OCI-LY7 (cell line): ENCODE measurements at regions of chr2 and their contacts with region 1.

Region 1: GRCh38 chr2:74250189-74250631 is 51.8 kb downstream of the MTHFD2 start:
- DNase-seq: peak; percentile 77
- H3K4me3 ChIP-seq: no peak overlapping the region
- H3K27ac ChIP-seq: no peak overlapping the region
- H3K4me1 ChIP-seq: no peaks in the 10 kb centered on the region
- CTCF ChIP-seq: peak; percentile 99

Region 2: DNA sequence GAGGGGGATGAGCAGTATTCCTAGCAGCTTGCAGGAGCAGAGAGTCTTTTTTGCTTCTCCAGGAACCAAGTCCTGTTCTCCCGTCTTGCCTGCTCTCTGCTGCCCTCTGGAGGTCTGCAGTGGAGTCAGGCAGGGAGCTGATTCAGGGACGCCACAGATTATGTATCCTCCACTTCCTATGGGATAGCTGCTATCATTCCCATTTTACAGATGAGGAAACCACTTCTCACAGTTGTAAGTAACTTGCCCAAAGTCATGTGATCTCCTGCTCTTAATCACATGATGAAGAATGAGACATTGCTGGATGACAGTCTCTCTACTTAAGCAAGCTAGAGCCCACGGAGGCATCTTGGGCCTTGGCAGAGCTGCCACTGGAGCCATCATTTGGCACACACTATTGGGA is 84.7 kb after region 1 on chr2:
- CTCF ChIA-PET with region 1: interaction called, 14 read pairs
- POLR2A ChIA-PET with region 1: interaction called, 3 read pairs
- intact Hi-C with region 1: loop called (anchors 1 kb)
- DNase-seq: peak; percentile 72
- H3K4me3 ChIP-seq: no peak overlapping the region
- H3K27ac ChIP-seq: no peak overlapping the region
- H3K4me1 ChIP-seq: no peaks in the 10 kb centered on the region
- CTCF ChIP-seq: peak; percentile 95

Region 3: DNA sequence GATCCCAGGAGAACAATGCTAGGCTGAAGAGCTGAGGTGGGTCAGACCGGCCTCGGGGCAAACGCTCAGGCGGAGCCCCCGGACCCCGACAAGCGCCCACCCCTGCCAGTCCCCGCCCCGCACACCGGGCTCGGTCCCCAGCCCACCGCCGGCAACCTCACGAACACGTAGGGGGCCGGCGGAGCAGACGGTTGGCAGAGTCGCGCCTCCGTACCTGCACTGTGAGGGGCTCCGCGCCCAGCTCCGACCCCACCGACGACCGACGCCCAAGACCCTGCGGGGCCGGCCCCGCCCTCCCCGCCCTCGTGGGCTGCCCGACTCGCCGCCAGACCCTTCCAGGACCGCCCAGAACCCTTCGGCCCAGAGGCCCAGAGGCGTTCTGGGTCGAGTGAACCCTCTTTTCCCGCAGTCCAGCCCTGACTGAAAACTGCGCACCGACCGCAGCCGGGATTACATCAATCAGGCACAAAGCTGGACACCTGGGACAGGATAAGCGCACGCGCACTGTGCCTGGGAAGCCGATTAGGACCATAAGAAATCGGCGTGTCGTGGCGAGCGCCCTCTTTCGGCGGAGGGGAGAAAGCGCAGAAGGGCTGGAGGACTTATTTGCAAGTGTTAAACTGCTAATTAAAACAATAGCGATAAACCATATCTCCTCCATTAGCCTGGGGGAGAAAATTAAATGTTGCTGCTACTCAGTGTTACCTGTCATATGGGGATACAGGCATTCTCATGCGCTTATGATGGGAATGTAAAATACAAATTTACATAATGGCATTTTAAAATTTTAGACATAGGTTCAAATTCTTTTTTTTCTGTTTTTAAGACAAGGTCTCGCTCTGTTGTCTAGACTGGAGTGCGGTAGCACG is 141.6 kb after region 1 on chr2:
- CTCF ChIA-PET with region 1: interaction called, 3 read pairs
- POLR2A ChIA-PET with region 1: no interaction called
- intact Hi-C with region 1: loop called (anchors 2 kb)
- DNase-seq: peak; percentile 95
- H3K4me3 ChIP-seq: peak overlapping the region; percentile 89
- H3K27ac ChIP-seq: peak overlapping the region; percentile 46
- H3K4me1 ChIP-seq: peaks cover 8% of the 10 kb centered on the region
- CTCF ChIP-seq: peak; percentile 97

Region 4: GRCh38 chr2:74399785-74400184 is 149.6 kb after region 1 on chr2:
- CTCF ChIA-PET with region 1: interaction called, 4 read pairs
- POLR2A ChIA-PET with region 1: no interaction called
- intact Hi-C with region 1: loop called (anchors 2 kb)
- DNase-seq: peak; percentile 62
- H3K4me3 ChIP-seq: no peak overlapping the region
- H3K27ac ChIP-seq: no peak overlapping the region
- H3K4me1 ChIP-seq: peaks cover 4% of the 10 kb centered on the region
- CTCF ChIP-seq: peak; percentile 85

Region 5: DNA sequence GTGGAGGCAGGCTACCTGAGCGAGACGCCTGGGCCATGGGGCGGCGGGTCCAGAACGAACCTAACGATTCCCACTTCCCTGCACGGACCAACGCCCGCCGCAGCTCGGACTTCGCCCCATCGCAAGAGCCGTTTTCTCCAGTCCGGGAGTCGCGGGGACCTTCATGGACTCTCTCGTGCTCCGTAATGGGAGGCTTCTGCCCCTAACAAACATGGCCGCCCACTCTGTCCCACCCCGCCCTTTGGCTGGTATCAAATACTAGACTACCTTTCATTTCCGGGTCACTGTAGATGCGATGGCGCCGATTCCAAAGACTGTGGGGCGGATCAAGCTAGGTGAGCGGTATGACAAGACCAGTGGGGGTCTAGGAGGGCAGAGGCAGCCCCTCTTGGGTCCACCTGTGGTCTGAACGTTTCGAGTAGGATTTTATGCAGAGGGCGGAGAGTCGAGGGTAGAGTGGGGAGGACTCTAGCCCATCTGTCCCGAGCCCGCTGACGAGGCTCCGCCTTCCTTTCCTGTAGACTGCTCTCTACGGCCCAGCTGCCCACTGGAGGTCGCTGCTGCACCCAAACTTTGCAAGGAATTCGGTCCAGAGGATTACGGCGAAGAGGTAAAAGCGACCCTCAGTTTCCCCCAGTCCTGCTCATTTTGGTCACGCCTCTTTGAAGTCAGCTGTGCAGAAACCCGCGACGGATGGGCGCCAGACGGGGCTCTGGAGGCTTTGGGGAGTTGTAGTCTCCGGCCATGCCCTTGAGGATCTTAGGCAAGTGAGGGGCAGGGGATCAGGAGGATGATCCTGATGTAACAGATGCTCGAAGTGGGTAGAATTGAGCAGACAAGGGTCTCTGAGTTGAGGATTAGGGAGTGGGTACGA is 232.8 kb after region 1 on chr2 and contains the starts of genes CCDC142 and TTC31:
- CTCF ChIA-PET with region 1: no interaction called
- POLR2A ChIA-PET with region 1: no interaction called
- intact Hi-C with region 1: loop called (anchors 1 kb)
- DNase-seq: peak; percentile 95
- H3K4me3 ChIP-seq: peak within 1 kb of the TSS; percentile 78
- H3K27ac ChIP-seq: peak within 1 kb of the TSS; percentile 80
- H3K4me1 ChIP-seq: peaks cover 18% of the 10 kb centered on the region
- CTCF ChIP-seq: peak; percentile 95
- total RNA-seq, gene CCDC142: 52.3 and 53.0 TPM in 2 replicates
- total RNA-seq, gene TTC31: 34.6 and 49.5 TPM in 2 replicates